Activated CD8-positive, alpha-beta T cell treated with anti-CD3 and anti-CD28 coated beads for 36 hours (primary cell): ENCODE measurements at regions of chr13 and their contacts with region 1.

Region 1: DNA sequence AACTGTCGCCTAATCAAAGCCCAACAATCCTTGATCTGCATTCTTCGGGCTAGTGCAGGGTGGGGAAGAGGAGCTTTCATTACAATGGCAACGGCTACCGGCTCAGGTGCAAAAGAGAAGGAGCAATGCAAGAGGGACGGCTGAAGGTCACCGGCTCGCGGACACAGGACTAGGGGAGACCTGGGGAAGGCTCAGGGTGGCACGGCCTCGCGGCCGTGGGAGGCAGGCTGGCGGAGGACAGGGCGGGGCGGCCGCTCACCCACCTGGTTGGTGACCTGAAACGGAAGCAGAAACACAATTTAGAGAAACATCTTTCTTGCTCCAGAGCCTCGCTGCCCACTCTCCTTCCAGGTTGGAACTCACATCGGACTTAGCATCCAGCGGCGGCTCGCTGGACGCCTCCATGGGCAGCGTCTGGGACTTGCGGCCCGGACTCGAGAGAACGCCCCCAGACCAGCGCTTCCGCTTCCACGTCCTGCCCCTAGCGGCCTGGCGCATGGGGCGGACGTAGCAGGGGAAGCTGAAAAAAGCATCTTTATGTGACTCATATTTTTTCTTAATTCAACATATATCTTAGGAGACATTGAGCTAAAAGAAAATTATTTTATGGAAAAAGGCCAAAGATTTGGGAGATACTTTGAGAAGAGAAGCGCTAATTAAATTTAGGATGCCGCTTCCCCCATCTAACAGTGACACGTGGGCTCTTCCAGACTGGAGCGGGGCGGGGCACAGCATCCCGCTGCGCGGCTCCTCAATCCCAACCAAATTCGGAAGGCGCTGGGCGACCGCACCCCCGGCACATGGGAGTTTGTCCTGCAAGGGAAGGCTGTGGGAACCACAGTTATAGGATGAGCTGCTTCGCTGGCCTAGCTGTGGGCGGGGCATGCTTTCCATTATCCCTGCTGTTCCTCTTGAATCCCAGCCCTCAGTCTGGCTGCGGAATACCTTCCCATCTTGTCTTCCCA is at the start of gene COMMD6:
- DNase-seq: peak; percentile 78
- ATAC-seq: peak; percentile 95
- H3K4me3 Mint-ChIP-seq: peak within 1 kb of the TSS; percentile 87
- H3K27ac Mint-ChIP-seq: peak within 1 kb of the TSS; percentile 89
- H3K4me1 Mint-ChIP-seq: peaks cover 35% of the 10 kb centered on the region
- H3K27me3 Mint-ChIP-seq: no peaks in the 10 kb centered on the region
- CTCF ChIP-seq: peak; percentile 18
- total RNA-seq, gene COMMD6: 114 to 116 TPM

Region 2: DNA sequence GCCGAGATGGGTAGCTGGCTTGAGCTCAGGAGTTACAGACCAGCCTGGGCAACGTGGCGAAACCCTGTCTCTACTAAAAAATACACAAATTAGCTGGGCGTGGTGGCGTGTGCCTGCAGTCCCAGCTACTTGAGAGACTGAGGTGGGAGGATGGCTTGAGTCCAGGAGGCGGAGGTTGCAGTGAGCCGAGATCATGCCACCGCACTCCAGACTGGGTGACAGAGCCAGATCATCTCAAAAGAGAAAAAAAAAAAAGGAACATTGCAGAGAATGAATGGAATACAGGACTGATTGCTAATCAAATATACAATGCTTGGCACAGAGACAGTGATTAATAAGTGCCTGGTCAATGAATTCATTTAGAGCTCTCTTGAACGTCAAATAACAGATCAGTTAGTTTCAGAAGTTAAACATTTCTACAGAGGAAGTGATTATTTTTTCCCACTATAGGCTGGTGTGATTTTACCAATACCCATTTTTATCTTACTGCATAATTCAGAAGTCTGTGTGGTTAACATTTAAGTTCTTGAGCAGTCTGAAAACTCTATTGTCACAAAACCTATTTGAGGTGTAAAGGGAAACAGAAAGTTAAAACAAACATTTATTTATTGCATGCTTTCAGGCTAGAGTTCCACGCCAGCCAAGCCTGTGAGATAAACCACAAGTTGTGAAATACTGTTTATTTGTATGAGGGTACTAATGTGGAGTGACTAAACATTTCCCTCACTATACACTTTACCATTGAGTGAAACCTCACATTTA is 48.0 kb before region 1 on chr13:
- CTCF ChIA-PET with region 1: no interaction called
- POLR2A ChIA-PET with region 1: interaction called, 3 read pairs
- intact Hi-C with region 1: loop called (anchors 5 kb)
- DNase-seq: peak; percentile 42
- ATAC-seq: peak; percentile 70
- H3K4me3 Mint-ChIP-seq: peak overlapping the region; percentile 34
- H3K27ac Mint-ChIP-seq: peak overlapping the region; percentile 48
- H3K4me1 Mint-ChIP-seq: peaks cover 23% of the 10 kb centered on the region
- H3K27me3 Mint-ChIP-seq: peaks cover 32% of the 10 kb centered on the region
- CTCF ChIP-seq: no peak

Region 3: DNA sequence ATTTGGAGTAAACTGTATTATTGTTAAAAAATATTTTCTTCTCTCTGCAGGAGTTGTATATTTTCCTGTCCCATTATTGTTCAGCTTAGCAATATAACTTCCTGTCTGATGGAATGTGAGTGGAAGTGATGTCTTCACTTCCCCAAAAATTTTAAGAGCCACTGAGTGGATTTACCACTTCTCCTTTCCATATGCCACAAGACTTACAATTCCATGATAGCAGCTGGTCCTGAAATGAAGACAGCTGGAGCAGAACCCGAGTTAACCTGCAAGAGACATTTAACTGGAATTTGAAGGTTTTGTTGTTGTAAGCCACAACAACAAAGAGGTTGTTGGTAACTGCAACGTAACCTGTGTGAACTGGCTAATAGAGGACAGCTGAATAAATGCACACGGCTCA is 32.4 kb before region 1 on chr13:
- CTCF ChIA-PET with region 1: no interaction called
- POLR2A ChIA-PET with region 1: no interaction called
- intact Hi-C with region 1: no loop called
- DNase-seq: no peak
- ATAC-seq: no peak
- H3K4me3 Mint-ChIP-seq: no peak overlapping the region
- H3K27ac Mint-ChIP-seq: no peak overlapping the region
- H3K4me1 Mint-ChIP-seq: peaks cover 2% of the 10 kb centered on the region
- H3K27me3 Mint-ChIP-seq: no peaks in the 10 kb centered on the region
- CTCF ChIP-seq: no peak

Region 4: GRCh38 chr13:75549262-75550158 is 11.8 kb after region 1 on chr13 and contains the start of gene UCHL3:
- CTCF ChIA-PET with region 1: interaction called, 10 read pairs
- POLR2A ChIA-PET with region 1: interaction called, 4 read pairs
- intact Hi-C with region 1: no loop called
- DNase-seq: peak; percentile 98
- ATAC-seq: peak; percentile 96
- H3K4me3 Mint-ChIP-seq: peak within 1 kb of the TSS; percentile 92
- H3K27ac Mint-ChIP-seq: peak within 1 kb of the TSS; percentile 97
- H3K4me1 Mint-ChIP-seq: peaks cover 41% of the 10 kb centered on the region
- H3K27me3 Mint-ChIP-seq: no peaks in the 10 kb centered on the region
- CTCF ChIP-seq: peak; percentile 90
- total RNA-seq, gene UCHL3: 32.9 to 36.4 TPM

Region 5: DNA sequence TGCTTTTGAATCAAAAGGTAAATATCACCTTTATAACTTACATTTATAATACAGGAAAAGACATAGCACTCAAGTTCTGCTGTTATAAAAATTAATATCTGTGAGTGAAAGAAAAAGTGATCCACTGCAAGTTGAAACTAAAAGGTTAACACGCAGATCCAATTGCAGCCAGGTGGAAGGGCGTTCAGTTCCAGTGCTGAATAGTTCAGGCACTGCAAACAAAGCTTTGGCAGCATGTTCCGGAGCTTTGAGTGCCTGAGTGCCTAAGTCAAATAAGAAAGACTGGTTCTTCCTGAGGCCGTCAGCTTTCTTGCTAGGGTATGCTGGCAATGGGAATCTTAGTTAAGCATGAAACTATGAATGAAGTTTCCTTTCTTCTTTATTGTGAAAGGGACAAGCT is 298.8 kb after region 1 on chr13:
- CTCF ChIA-PET with region 1: no interaction called
- POLR2A ChIA-PET with region 1: no interaction called
- intact Hi-C with region 1: no loop called
- DNase-seq: no peak
- ATAC-seq: no peak
- H3K4me3 Mint-ChIP-seq: no peak overlapping the region
- H3K27ac Mint-ChIP-seq: no peak overlapping the region
- H3K4me1 Mint-ChIP-seq: peaks cover 3% of the 10 kb centered on the region
- H3K27me3 Mint-ChIP-seq: no peaks in the 10 kb centered on the region
- CTCF ChIP-seq: no peak

Region 6: DNA sequence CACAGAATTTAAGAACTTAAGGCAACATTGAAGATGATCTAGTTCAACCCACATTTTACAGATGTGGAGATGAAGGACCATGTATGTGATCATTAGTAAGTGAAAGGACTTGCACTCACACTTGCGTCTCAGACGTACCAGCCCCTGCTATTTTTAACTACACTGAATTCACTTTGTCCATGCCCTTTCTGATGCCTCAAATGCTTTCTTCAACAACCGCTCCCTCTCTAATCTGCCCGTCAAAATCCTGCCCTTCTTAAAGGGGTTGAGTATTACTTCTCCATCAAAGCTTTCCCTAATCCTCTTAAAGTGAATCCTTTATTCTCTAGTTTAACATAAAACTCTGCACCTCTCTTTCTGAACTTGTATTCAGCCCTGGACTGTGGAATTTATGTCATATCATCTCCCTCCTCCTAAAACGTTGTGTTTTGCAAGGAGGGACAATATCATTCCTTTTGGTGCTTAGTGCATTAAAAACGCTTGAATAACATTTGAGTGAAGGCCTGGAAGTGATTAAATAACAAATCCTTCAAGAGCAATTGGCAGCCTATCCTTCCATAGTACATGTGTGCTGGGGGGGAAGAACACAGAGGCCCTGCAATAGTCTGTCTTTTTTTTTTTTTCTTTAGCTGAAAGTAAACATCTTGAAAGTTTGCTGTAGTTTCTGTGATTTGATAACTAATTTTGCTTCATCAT is 591.8 kb after region 1 on chr13:
- CTCF ChIA-PET with region 1: no interaction called
- POLR2A ChIA-PET with region 1: no interaction called
- intact Hi-C with region 1: no loop called
- DNase-seq: no peak
- ATAC-seq: no peak
- H3K4me3 Mint-ChIP-seq: no peak overlapping the region
- H3K27ac Mint-ChIP-seq: no peak overlapping the region
- H3K4me1 Mint-ChIP-seq: no peaks in the 10 kb centered on the region
- H3K27me3 Mint-ChIP-seq: peaks cover 3% of the 10 kb centered on the region
- CTCF ChIP-seq: no peak